Cardiac septum (tissue), 1 donor: ENCODE measurements at regions of chr5 and their contacts with region 1.

Region 1: GRCh38 chr5:6692906-6693305 is 20.3 kb upstream of the TENT4A start:
- DNase-seq: no peak

Region 2: GRCh38 chr5:6713276-6714181 is 20.6 kb after region 1 on chr5 and contains the start of gene TENT4A:
- intact Hi-C with region 1: no loop called
- DNase-seq: no peak
- total RNA-seq, gene TENT4A: 18.4 TPM

Region 3: DNA sequence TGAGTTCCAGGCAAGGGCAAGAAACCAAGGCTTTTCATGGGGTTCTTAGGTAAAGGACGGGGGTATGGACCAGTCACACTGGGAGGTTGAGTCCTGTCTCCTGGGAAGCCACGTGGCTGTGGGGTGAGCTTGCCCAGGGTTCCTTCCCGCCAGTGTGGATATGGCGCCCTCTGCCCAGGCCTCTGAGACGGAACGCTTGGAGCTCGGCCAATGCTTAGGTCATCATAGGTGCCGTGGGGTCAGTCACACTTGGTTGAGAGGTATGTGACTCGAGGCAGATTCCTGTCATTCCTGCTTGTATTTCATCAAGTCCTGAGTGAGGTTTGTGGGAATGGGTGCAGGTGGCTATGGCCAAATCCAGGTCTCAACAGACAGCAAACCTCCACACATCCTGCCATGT is 66.5 kb after region 1 on chr5:
- intact Hi-C with region 1: loop called (anchors 10 kb)
- DNase-seq: no peak